SK-N-SH (cell line): ENCODE measurements at regions of chr1 and their contacts with region 1.

Region 1: DNA sequence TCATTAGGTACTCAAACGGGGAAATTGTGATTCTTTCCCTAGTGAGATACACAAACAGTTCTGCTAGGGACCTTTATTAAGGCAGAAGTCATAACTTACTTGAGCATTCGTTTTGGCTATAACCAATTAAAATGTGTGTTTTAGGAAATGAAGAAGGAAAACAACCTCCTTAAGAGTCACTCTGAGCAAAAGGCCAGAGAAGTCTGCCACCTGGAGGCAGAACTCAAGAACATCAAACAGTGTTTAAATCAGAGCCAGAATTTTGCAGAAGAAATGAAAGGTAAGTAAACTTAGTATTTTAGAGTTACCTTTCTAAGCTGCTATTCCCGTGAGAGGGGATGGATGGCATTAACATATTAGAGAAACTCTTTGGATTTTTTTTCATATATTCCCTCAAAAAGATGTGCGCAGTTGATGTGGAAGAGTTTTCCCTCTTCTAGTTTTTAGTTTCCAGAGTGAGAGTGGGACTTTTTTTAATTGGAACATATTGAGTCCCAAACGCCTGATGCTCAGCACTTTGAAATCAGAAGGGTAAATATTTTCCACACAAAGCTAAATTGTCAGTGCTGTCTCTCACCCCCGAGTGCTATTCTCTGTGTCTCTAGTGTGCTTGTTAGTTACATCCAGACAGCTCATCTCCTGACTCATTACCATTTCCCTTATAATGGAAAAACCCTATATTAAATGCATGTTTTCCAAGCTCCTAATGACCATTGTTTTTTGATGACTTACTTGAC is 34.9 kb downstream of the CENPF start:
- DNase-seq: no peak
- H3K4me3 ChIP-seq: no peak overlapping the region; a peak in 1 of 4 replicates
- H3K27ac ChIP-seq: no peak overlapping the region
- H3K4me1 ChIP-seq: peaks cover 2 to 9% of the 10 kb centered on the region in 2 experiments; a peak in 3 of 4 replicates
- H3K27me3 ChIP-seq: no peaks in the 10 kb centered on the region
- CTCF ChIP-seq: peak; percentile 84
- EP300 ChIP-seq: no peak
- RAD21 ChIP-seq: peak; percentile 56

Region 2: GRCh38 chr1:214213136-214213535 is 424.8 kb before region 1 on chr1:
- CTCF ChIA-PET with region 1: interaction called, 10 read pairs
- POLR2A ChIA-PET with region 1: no interaction called
- DNase-seq: no peak
- H3K4me3 ChIP-seq: no peak overlapping the region
- H3K27ac ChIP-seq: no peak overlapping the region
- H3K4me1 ChIP-seq: peaks cover 0 to 3% of the 10 kb centered on the region in 2 experiments; a peak in 1 of 4 replicates
- H3K27me3 ChIP-seq: peaks cover 8% of the 10 kb centered on the region; the same call in 1 of the 2 replicates
- CTCF ChIP-seq: no peak
- EP300 ChIP-seq: no peak
- RAD21 ChIP-seq: no peak

Region 3: DNA sequence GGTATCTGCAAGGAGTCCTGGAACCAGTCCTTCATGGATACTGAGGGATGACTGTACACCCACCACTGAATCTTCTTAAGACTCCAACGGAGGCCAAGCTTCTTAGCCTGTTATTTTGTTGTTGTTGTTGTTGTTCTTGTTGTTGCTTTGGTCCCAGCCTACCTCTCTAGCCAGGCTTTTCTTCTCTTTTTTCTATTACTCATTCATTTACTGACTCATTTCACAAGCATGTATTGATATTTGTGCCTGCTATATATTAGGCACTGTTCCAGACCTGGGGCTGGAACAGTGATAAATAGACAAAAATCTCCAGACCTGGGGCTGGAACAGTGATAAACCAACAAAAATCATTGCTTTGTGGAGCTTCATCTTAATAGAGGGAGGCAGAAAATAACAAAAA is 14.5 kb before region 1 on chr1:
- CTCF ChIA-PET with region 1: interaction called, 77 read pairs
- POLR2A ChIA-PET with region 1: no interaction called
- DNase-seq: no peak
- H3K4me3 ChIP-seq: no peak overlapping the region
- H3K27ac ChIP-seq: no peak overlapping the region
- H3K4me1 ChIP-seq: no peaks in the 10 kb centered on the region
- H3K27me3 ChIP-seq: no peaks in the 10 kb centered on the region
- CTCF ChIP-seq: no peak
- EP300 ChIP-seq: no peak
- RAD21 ChIP-seq: no peak

Region 4: GRCh38 chr1:214648801-214649200 is 10.9 kb after region 1 on chr1:
- CTCF ChIA-PET with region 1: interaction called, 32 read pairs
- POLR2A ChIA-PET with region 1: no interaction called
- DNase-seq: no peak
- H3K4me3 ChIP-seq: no peak overlapping the region
- H3K27ac ChIP-seq: no peak overlapping the region
- H3K4me1 ChIP-seq: no peaks in the 10 kb centered on the region; a peak in 1 of 4 replicates
- H3K27me3 ChIP-seq: no peaks in the 10 kb centered on the region
- CTCF ChIP-seq: no peak
- EP300 ChIP-seq: no peak
- RAD21 ChIP-seq: no peak

Region 5: DNA sequence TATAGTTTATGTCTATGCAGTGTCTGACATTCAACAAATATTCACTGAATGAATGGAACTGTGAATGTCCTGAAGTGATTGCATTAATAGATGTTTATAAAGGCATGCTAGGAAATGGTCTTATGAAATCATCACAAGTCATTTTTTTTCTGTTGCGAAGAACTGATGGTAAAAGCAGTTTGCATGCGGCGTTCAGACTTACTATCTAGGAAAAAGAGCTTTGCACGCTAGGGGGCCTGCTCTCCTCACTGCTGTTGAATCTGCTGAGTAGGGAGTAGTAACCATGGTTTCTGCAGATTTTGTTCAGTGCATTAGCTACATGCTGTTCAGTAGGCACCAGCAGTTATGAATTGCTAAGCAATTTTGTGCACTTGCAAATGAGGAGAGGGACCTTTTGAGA is 23.0 kb after region 1 on chr1:
- CTCF ChIA-PET with region 1: interaction called, 19 read pairs
- POLR2A ChIA-PET with region 1: no interaction called
- DNase-seq: no peak
- H3K4me3 ChIP-seq: no peak overlapping the region
- H3K27ac ChIP-seq: no peak overlapping the region
- H3K4me1 ChIP-seq: no peaks in the 10 kb centered on the region; a peak in 1 of 4 replicates
- H3K27me3 ChIP-seq: no peaks in the 10 kb centered on the region
- CTCF ChIP-seq: peak; percentile 45; the same call in 1 of the 2 replicates
- EP300 ChIP-seq: no peak
- RAD21 ChIP-seq: peak; percentile 59

Region 6: DNA sequence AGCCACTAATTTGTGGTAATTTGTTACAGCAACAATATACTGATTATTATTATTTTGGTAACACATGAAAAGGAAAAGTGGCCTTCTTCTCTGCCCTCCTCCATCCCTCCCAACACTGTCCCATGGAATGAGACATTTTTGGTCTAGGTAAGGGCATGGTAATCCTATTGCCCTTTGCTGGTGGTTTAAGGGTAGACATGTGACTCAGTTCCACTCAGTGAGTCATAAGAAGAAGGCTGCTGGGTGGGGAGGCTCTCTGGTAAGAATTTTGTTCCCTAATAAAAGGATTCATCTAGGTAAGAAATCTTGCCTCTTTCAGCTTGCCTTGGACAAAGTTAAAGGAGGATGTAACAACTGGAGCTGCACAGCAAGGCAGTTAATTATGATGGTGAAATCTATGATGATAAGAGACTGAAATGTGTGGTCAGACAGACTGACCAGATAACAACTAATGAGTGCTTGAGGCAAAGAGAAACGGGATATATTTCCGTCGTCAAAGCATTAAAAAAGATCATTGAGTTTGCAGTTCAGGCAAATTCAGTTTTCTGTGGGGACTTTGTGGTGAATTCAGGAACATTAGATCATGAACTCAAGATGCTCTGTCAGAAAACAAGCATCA is 212.7 kb after region 1 on chr1:
- CTCF ChIA-PET with region 1: no interaction called
- POLR2A ChIA-PET with region 1: no interaction called
- DNase-seq: no peak
- H3K4me3 ChIP-seq: no peak overlapping the region
- H3K27ac ChIP-seq: no peak overlapping the region
- H3K4me1 ChIP-seq: peaks cover 0 to 2% of the 10 kb centered on the region in 2 experiments; a peak in 2 of 4 replicates
- H3K27me3 ChIP-seq: no peaks in the 10 kb centered on the region
- CTCF ChIP-seq: no peak
- EP300 ChIP-seq: no peak
- RAD21 ChIP-seq: no peak